H1 (cell line): ENCODE measurements at regions of chr15 and their contacts with region 1.

Region 1: GRCh38 chr15:78872972-78873792 is 492 bp downstream of the MORF4L1 start:
- DNase-seq: peak; percentile 79 to 89
- H3K4me3 ChIP-seq: peak overlapping the region; percentile 97 to 100 (median 99)
- H3K27ac ChIP-seq: peak overlapping the region; percentile 100
- H3K4me1 ChIP-seq: peaks cover 1 to 11% (median 7%) of the 10 kb centered on the region in 4 experiments; a peak in 3 of 7 replicates
- H3K27me3 ChIP-seq: no peaks in the 10 kb centered on the region
- CTCF ChIP-seq: peak; percentile 57 to 76 (median 60)
- EP300 ChIP-seq: peak; percentile 7 to 55; a peak in 1 of 3 replicates
- POLR2A ChIP-seq: peak; percentile 88 to 91
- RAD21 ChIP-seq: peak; percentile 13 to 35; a peak in 3 of 4 replicates

Region 2: GRCh38 chr15:78638658-78639314 is 234.4 kb before region 1 on chr15:
- CTCF ChIA-PET with region 1: no interaction called
- POLR2A ChIA-PET with region 1: no interaction called
- DNase-seq: peak; percentile 34 to 92
- H3K4me3 ChIP-seq: no peak overlapping the region
- H3K27ac ChIP-seq: no peak overlapping the region
- H3K4me1 ChIP-seq: peaks cover 2 to 16% (median 7%) of the 10 kb centered on the region in 4 experiments; a peak in 6 of 7 replicates
- H3K27me3 ChIP-seq: peaks cover 0 to 6% (median 4%) of the 10 kb centered on the region in 4 experiments; a peak in 2 of 7 replicates
- CTCF ChIP-seq: peak; percentile 72 to 90 (median 77)
- EP300 ChIP-seq: no peak
- POLR2A ChIP-seq: no peak
- RAD21 ChIP-seq: peak; percentile 92

Region 3: DNA sequence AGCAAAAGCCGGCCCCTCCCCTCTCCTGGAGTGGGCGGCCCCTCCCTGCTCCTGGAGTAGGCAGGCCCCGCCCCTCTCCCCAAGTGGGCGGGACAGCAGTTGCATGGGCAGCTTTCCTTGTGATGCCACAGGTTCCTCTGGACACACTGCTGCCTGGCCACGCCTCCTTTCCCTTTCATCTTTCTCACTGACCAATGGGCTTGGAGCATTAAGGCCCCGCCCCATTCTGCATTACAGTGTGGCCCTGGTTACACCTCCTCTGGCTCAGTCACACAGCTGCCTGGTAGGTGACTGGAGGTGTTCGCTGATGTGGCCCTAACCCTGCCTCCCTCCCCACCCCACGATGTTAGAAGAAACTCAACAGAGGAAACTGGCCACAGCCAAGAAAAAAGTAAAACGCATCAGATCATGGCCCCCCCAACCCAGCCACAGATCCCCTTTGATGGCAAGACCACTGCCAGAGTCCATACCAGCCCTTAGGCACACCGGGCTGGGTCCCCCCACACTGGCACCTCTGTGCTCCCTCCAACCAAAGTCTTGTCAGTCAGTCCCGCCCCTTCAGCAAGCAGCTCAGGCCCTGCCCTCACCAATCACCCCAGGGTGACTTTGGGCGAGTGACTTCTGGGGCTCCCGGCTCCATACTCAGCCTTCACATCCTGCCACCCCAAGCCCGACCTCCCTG is 146.2 kb before region 1 on chr15:
- CTCF ChIA-PET with region 1: no interaction called
- POLR2A ChIA-PET with region 1: no interaction called
- DNase-seq: peak in 1 of 2 experiments; percentile 88
- H3K4me3 ChIP-seq: no peak overlapping the region
- H3K27ac ChIP-seq: no peak overlapping the region; the same call in 1 of the 2 replicates
- H3K4me1 ChIP-seq: peaks cover 0 to 6% (median 3%) of the 10 kb centered on the region in 4 experiments; a peak in 3 of 7 replicates
- H3K27me3 ChIP-seq: no peaks in the 10 kb centered on the region
- CTCF ChIP-seq: no peak
- EP300 ChIP-seq: no peak
- POLR2A ChIP-seq: peak in 1 of 2 experiments; percentile 44; a peak in 1 of 3 replicates
- RAD21 ChIP-seq: no peak

Region 4: GRCh38 chr15:78840661-78841375 is 32.4 kb before region 1 on chr15:
- CTCF ChIA-PET with region 1: no interaction called
- POLR2A ChIA-PET with region 1: interaction called, 14 read pairs
- DNase-seq: no peak
- H3K4me3 ChIP-seq: no peak overlapping the region
- H3K27ac ChIP-seq: no peak overlapping the region
- H3K4me1 ChIP-seq: peaks cover 0 to 3% (median 0%) of the 10 kb centered on the region in 4 experiments; a peak in 1 of 7 replicates
- H3K27me3 ChIP-seq: no peaks in the 10 kb centered on the region
- CTCF ChIP-seq: no peak
- EP300 ChIP-seq: no peak
- POLR2A ChIP-seq: no peak
- RAD21 ChIP-seq: no peak

Region 5: DNA sequence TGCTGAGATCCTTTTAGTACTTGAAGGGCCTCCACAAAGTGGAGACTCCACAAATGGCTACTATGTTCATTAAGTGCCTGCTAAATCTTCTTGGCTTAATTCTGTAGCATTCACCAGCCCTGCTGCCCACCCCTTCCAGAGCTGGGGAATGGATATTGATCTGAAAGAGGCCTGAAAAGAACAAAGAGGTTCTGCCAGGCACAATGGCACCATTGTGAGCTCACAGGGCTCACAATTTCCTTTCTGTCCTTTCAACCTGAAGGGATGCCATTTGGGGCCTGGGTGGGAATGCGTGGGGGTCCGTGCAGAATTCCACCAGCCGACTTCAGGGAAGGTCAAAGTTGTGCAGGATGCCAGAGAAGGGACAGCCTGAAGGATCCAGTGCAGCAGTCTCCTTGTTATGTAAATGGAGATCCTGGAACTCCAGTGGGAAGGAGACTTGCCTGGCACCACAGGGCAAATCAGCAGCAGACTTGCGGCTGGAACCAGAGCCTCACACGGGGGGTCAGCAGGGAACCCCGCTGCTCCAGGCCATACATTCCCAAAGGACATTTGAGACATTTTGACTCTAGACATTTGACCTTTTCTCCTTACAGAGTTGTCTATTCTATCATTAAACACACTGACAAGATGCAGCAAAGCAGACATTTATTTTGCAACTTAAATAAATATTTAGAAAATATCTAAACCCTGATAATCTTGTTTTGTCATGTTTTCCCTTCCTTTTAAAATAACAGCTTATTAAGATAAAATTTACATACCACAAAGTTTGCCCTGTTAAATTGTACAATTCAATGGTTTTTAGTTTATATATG is 22.0 kb before region 1 on chr15:
- CTCF ChIA-PET with region 1: interaction called, 4 read pairs
- POLR2A ChIA-PET with region 1: interaction called, 13 read pairs
- DNase-seq: no peak
- H3K4me3 ChIP-seq: no peak overlapping the region
- H3K27ac ChIP-seq: no peak overlapping the region
- H3K4me1 ChIP-seq: peaks cover 3 to 8% (median 5%) of the 10 kb centered on the region in 4 experiments
- H3K27me3 ChIP-seq: no peaks in the 10 kb centered on the region
- CTCF ChIP-seq: no peak
- EP300 ChIP-seq: no peak
- POLR2A ChIP-seq: no peak
- RAD21 ChIP-seq: no peak

Region 6: DNA sequence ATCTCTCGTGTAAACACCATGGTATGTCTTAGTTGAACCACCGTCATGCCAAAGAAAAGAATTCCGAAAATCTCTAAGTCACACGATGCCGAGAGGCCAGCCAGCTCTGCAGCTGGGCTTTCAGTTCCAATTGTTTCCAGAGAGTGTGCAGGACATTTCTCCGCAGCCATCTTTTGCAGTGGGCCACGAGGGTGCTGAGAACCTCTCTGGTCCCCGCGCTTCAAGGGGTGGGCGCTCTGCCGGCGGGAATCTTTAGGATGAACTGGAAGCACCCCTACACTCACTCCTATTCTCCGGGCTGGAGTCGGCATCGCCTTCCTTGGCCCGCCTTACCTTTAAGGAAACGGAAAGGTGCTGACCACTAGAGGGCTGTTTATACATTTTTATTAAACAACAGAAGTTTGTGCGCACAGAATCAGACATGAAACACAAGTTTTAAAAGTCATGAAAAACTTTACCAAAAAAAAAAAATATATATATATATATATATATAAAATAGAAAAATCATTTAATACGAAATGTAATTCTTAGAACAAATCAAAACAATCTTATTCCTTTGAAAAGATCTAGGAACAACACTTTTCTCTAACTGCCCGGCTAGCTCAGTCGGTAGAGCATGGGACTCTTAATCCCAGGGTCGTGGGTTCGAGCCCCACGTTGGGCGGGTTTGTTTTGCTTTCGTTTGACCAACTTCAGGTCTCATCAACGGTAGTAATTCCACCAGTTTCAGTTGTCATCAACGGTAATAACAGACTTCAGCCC is 13.0 kb before region 1 on chr15:
- CTCF ChIA-PET with region 1: interaction called, 21 read pairs
- POLR2A ChIA-PET with region 1: interaction called, 59 read pairs
- DNase-seq: peak; percentile 87 to 88
- H3K4me3 ChIP-seq: peak overlapping the region; percentile 70 to 94 (median 78)
- H3K27ac ChIP-seq: peak overlapping the region; percentile 78
- H3K4me1 ChIP-seq: no peaks in the 10 kb centered on the region
- H3K27me3 ChIP-seq: no peaks in the 10 kb centered on the region
- CTCF ChIP-seq: peak; percentile 30 to 41 (median 33); a peak in 3 of 4 replicates
- EP300 ChIP-seq: no peak
- POLR2A ChIP-seq: peak; percentile 62 to 92
- RAD21 ChIP-seq: peak; percentile 22 to 32; a peak in 3 of 4 replicates

Region 7: GRCh38 chr15:78893538-78893937 is 20.4 kb after region 1 on chr15:
- CTCF ChIA-PET with region 1: interaction called, 5 read pairs
- POLR2A ChIA-PET with region 1: interaction called, 10 read pairs
- DNase-seq: no peak
- H3K4me3 ChIP-seq: no peak overlapping the region
- H3K27ac ChIP-seq: no peak overlapping the region
- H3K4me1 ChIP-seq: no peaks in the 10 kb centered on the region
- H3K27me3 ChIP-seq: no peaks in the 10 kb centered on the region
- CTCF ChIP-seq: no peak
- EP300 ChIP-seq: no peak
- POLR2A ChIP-seq: no peak
- RAD21 ChIP-seq: no peak